OCI-LY7 (cell line): ENCODE measurements at regions of chr9 and their contacts with region 1.

Region 1: GRCh38 chr9:12230708-12231107 is 462.5 kb upstream of the TYRP1 start:
- DNase-seq: no peak
- H3K4me3 ChIP-seq: no peak overlapping the region
- H3K27ac ChIP-seq: no peak overlapping the region
- H3K4me1 ChIP-seq: no peaks in the 10 kb centered on the region
- CTCF ChIP-seq: no peak

Region 2: GRCh38 chr9:12178634-12179033 is 52.1 kb before region 1 on chr9:
- CTCF ChIA-PET with region 1: no interaction called
- POLR2A ChIA-PET with region 1: no interaction called
- intact Hi-C with region 1: loop called (anchors 5 kb)
- DNase-seq: no peak
- H3K4me3 ChIP-seq: no peak overlapping the region
- H3K27ac ChIP-seq: no peak overlapping the region
- H3K4me1 ChIP-seq: no peaks in the 10 kb centered on the region
- CTCF ChIP-seq: no peak